Mucosa of descending colon (tissue), 3 donors: ENCODE measurements at regions of chr5 and their contacts with region 1.

Region 1: DNA sequence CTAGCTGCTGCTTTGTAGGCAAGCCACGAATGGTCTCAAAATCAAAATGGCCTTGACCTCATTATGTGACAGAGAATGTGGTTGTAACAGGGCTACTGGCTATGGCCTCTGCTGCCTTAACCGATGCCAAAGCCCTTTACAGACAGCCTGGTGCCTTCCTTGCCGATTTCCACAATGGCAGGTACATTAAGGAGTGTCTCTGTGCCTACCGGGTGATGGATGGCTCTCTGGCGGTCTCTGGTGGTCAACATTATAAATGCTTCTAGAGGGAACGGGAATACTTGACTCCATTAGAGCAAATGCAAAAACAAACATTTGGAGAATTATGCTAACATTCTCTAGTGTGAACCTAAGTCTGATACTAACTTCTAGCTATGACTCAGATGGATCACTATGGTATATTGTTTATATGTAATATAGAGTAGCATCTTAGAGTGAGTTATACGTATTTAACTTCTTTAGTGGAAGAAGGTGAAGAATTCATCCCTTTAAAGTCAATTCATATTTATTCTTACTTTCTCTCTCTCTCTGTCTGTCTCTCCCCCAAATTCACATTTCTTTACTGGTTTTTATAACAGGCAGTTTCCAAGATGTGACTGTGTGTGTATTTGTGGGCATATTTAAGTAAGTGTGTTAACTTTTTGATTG is 52.5 kb downstream of the RPS23 start:
- DNase-seq: peak in 2 of 3 donors; percentile 41 to 83
- ATAC-seq: peak; percentile 91
- H3K4me3 ChIP-seq: no peak overlapping the region
- H3K4me1 ChIP-seq: no peaks in the 10 kb centered on the region
- CTCF ChIP-seq: peak; percentile 75

Region 2: GRCh38 chr5:81425569-81425968 is 800.1 kb before region 1 on chr5:
- intact Hi-C with region 1: loop called in 1 of 2 experiments (anchors 10 kb)
- DNase-seq: no peak
- ATAC-seq: no peak
- H3K4me3 ChIP-seq: no peak overlapping the region
- H3K4me1 ChIP-seq: no peaks in the 10 kb centered on the region
- CTCF ChIP-seq: no peak

Region 3: DNA sequence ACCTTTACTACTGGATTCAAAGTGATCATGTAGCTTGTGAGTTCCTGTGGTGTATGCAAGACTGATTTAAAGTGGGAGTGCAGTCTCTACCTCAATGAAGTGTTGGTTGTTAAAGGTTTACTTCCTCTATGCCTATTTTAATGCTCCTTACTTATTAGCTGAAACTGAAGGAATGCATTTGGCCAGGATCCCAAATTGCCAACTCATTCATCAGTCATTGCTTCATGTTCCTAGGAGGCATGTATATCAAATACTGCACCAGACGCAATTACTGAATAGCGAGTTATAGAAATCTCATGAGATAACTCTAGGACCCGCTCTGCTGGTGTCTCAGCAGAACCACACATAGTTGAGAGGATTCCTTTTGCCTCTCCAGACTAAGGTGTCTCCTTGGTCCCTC is 195.5 kb after region 1 on chr5:
- intact Hi-C with region 1: no loop called
- DNase-seq: no peak
- ATAC-seq: no peak
- H3K4me3 ChIP-seq: no peak overlapping the region
- H3K4me1 ChIP-seq: no peaks in the 10 kb centered on the region
- CTCF ChIP-seq: no peak